ENCODE measurements at regions of chr5 and their contacts with region 1.

Region 1: DNA sequence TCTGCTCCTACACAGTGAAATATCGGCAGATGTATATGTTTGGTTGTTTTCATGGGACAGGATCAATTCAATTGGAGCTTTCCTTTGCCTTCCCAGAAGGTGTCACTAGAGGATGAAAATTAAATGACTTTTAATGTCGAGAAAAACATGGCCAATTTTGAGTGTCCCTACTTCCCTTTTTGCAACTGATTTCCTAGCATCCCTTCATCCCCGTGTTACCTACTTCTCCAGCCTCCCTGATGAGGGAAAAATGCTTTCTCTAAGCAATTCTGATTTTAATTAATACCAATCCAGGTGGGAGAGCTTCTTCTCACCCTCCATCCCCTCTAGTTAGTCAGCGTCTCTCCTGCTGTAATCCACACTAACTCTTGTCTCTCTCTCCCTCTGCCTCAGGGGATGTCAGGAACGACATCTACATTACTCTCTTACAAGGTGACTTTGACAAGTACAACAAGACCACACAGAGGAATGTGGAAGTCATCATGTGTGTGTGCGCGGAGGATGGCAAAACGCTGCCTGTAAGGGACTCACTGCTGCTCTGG is 64.9 kb downstream of the DOCK2 start:
- DNase-seq: no peak

Region 2: GRCh38 chr5:169686137-169686536 is 15.8 kb before region 1 on chr5:
- intact Hi-C with region 1: no loop called
- DNase-seq: no peak

Region 3: GRCh38 chr5:169956756-169957155 is 254.8 kb after region 1 on chr5:
- intact Hi-C with region 1: no loop called
- DNase-seq: no peak

Region 4: GRCh38 chr5:169980418-169981053 is 278.6 kb after region 1 on chr5 and contains the start of gene INSYN2B:
- intact Hi-C with region 1: loop called (anchors 2 kb)
- DNase-seq: no peak
- total RNA-seq, gene INSYN2B: not detected

Region 5: DNA sequence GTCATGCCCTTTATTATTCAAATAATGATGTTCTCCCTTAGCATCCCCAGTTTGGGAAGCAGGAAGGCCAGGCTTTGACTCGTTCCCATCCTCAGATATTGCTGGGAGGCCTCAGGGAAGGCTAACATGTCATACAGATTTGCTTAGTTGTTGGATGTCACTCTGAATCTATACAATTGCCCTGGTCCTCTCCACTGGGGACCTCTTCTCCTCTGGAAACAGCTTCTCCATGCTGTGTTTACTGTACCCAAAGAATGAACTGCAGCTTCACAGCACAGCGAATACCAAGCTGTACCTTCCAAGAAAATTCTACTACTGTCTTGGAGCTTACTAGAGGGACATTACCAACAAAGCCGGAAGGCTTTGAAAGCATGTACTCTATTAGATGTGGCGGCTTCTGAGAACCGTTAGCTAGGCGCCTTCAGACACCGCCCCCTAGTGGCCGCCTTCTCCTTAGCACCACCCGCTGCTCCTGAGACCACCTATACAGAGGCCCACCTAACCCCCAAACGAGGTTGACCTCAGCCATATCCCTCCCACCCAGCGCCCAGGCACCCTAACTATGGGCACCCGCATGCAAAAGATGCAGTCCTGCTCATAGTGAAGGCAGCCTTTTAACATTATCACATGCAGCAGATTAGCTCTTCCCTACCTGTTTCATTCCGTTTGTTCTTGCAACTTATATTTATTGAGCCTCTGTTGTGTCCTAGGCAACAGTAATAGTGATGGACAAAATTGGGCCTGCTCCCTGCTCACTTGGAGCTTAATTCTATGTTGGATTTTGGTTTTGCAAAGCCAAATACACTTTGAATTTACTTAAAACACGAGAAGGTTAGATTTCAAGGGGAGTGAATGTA is 368.8 kb after region 1 on chr5:
- intact Hi-C with region 1: loop called (anchors 5 kb)
- DNase-seq: no peak